ENCODE measurements at regions of chr7 and their contacts with region 1.

Region 1: GRCh38 chr7:70829221-70830059 is 302.5 kb upstream of the GALNT17 start:
- DNase-seq: peak; percentile 60 to 66 (median 63)
- H3K4me3 ChIP-seq: no peak overlapping the region
- H3K4me3 Mint-ChIP-seq: peak overlapping the region; percentile 67 to 88 (median 80)
- H3K27ac ChIP-seq: no peak overlapping the region
- H3K27ac Mint-ChIP-seq: peak overlapping the region in 4 of 7 donors; percentile 17 to 72 (median 36)
- H3K4me1 ChIP-seq: no peaks in the 10 kb centered on the region
- H3K4me1 Mint-ChIP-seq: peaks cover 7 to 13% (median 9%) of the 10 kb centered on the region in 4 donors
- H3K27me3 ChIP-seq: no peaks in the 10 kb centered on the region
- H3K27me3 Mint-ChIP-seq: peaks cover 0 to 1% of the 10 kb centered on the region in 2 donors

Region 2: GRCh38 chr7:70720191-70720873 is 109.1 kb before region 1 on chr7:
- CTCF ChIA-PET with region 1: interaction called, 10 read pairs
- POLR2A ChIA-PET with region 1: no interaction called
- intact Hi-C with region 1: no loop called
- DNase-seq: no peak
- H3K4me3 ChIP-seq: no peak overlapping the region
- H3K4me3 Mint-ChIP-seq: peak overlapping the region; percentile 3 to 69 (median 56)
- H3K27ac ChIP-seq: no peak overlapping the region
- H3K27ac Mint-ChIP-seq: peak overlapping the region; percentile 33 to 83 (median 71)
- H3K4me1 ChIP-seq: peaks cover 10% of the 10 kb centered on the region
- H3K4me1 Mint-ChIP-seq: peaks cover 24 to 61% (median 38%) of the 10 kb centered on the region in 4 donors
- H3K27me3 ChIP-seq: no peaks in the 10 kb centered on the region
- H3K27me3 Mint-ChIP-seq: no peaks in the 10 kb centered on the region

Region 3: DNA sequence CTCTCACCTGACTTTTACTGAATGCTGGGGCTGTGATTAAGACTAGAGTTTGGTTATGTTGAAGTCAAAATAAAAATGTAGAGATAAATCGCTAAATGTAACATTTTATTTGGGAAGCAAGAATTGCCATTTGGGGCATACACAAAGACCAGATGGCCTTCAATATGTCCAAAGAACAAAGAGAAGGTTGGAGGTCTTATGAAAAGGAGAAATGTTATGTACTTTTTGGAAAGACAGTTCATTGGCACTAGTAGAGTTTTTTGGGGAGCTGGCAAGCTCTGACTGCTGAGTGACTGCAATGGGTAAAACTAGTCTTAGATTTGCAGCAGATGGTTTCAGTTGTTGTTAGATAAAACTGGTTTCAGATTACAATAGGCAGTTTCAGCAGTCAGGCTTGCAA is 266.9 kb after region 1 on chr7:
- CTCF ChIA-PET with region 1: no interaction called
- POLR2A ChIA-PET with region 1: no interaction called
- intact Hi-C with region 1: no loop called
- DNase-seq: no peak
- H3K4me3 ChIP-seq: no peak overlapping the region
- H3K4me3 Mint-ChIP-seq: no peak overlapping the region
- H3K27ac ChIP-seq: no peak overlapping the region
- H3K27ac Mint-ChIP-seq: no peak overlapping the region
- H3K4me1 ChIP-seq: no peaks in the 10 kb centered on the region
- H3K4me1 Mint-ChIP-seq: no peaks in the 10 kb centered on the region
- H3K27me3 ChIP-seq: no peaks in the 10 kb centered on the region
- H3K27me3 Mint-ChIP-seq: no peaks in the 10 kb centered on the region

Region 4: DNA sequence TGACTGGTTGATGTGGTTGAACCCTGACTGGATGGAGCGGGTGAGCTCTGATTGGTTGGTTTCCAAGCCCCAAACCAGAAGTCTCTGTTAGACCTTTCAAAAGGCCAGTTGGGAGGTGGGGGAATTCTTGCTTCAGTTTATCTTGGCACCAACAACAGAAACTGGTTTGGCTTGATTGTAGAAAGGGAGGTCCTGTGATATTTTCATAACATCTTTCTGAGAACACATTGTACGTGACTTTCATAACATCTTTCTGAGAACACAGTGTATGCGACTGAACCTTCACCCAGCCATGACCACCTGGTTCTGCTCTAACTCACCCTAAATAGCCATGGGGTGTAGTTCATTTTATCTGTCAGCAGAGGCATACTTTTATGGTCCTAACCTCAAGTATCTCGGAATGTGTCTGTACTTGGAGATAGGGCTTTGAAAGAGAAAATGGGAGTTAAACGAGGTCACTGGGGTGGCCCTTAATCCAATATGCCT is 390.8 kb after region 1 on chr7:
- CTCF ChIA-PET with region 1: no interaction called
- POLR2A ChIA-PET with region 1: no interaction called
- intact Hi-C with region 1: no loop called
- DNase-seq: no peak
- H3K4me3 ChIP-seq: no peak overlapping the region
- H3K4me3 Mint-ChIP-seq: no peak overlapping the region
- H3K27ac ChIP-seq: no peak overlapping the region
- H3K27ac Mint-ChIP-seq: no peak overlapping the region
- H3K4me1 ChIP-seq: no peaks in the 10 kb centered on the region
- H3K4me1 Mint-ChIP-seq: no peaks in the 10 kb centered on the region
- H3K27me3 ChIP-seq: no peaks in the 10 kb centered on the region
- H3K27me3 Mint-ChIP-seq: no peaks in the 10 kb centered on the region

Region 5: DNA sequence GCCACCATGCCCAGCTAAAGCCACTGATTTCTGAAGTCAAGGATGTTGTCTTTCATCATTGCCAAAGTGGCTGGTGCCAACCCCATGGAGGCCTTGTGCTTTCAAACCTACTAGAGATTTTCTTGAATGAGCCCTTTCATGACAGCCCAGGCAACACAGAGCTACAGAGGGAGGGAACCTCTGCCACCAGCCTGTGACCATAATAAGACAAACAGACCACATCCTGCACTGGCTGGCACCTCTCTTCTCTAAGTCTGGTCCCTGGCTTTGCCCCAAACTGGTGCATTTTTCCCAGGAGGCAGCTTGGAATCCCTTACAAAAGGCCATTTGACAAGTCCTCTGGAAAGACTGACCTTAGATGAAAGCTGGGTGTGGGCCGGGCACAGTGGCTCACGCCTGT is 651.4 kb after region 1 on chr7:
- CTCF ChIA-PET with region 1: no interaction called
- POLR2A ChIA-PET with region 1: no interaction called
- intact Hi-C with region 1: no loop called
- DNase-seq: no peak
- H3K4me3 ChIP-seq: no peak overlapping the region
- H3K4me3 Mint-ChIP-seq: no peak overlapping the region
- H3K27ac ChIP-seq: no peak overlapping the region
- H3K27ac Mint-ChIP-seq: no peak overlapping the region
- H3K4me1 ChIP-seq: no peaks in the 10 kb centered on the region
- H3K4me1 Mint-ChIP-seq: no peaks in the 10 kb centered on the region
- H3K27me3 ChIP-seq: no peaks in the 10 kb centered on the region
- H3K27me3 Mint-ChIP-seq: no peaks in the 10 kb centered on the region

Region 6: DNA sequence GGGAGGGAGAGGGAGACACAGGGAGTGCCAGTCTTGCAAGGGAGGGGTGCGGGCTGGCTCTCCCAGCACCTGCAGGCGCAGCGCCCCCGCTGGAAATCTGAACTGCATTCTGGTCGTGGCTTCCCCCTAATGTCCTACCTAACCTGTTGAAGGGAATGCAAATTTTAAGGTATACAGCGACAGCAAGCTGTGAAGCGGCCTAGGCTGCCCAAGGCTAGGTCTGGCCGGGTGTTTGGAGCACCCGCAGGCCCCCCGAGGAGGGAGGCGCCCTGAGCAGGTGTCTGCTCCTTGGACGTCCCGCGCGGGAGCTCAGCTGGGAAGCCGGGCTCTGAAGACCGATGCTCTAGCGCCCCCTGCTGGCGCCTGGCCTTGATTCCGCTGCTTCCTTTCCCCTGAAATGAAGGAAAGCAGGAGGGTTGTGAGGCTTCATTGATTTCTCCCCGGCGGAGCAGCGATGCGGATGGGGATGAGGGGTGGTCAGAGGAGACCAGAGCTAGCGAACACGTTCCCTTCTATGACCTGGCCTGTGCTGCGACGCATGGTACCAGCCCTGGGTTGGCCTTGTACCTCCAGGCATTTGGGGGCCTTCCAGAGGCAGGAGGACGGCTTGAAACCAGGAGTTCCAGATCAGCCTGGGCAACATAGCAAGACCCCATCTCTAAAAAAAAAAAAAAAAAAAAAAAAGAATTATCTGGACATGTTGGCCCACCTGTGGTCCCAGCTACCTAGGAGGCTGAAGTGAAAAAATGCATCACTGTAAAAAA is 903.8 kb after region 1 on chr7:
- CTCF ChIA-PET with region 1: interaction called, 52 read pairs
- POLR2A ChIA-PET with region 1: interaction called, 4 read pairs
- intact Hi-C with region 1: no loop called
- DNase-seq: peak; percentile 37 to 55 (median 46)
- H3K4me3 ChIP-seq: no peak overlapping the region
- H3K4me3 Mint-ChIP-seq: no peak overlapping the region
- H3K27ac ChIP-seq: no peak overlapping the region
- H3K27ac Mint-ChIP-seq: peak overlapping the region in 1 of 7 donors; percentile 60
- H3K4me1 ChIP-seq: no peaks in the 10 kb centered on the region
- H3K4me1 Mint-ChIP-seq: peaks cover 0 to 7% (median 2%) of the 10 kb centered on the region in 4 donors
- H3K27me3 ChIP-seq: no peaks in the 10 kb centered on the region
- H3K27me3 Mint-ChIP-seq: no peaks in the 10 kb centered on the region

Region 7: GRCh38 chr7:72493850-72494661 is 1664.6 kb after region 1 on chr7:
- CTCF ChIA-PET with region 1: no interaction called
- POLR2A ChIA-PET with region 1: no interaction called
- intact Hi-C with region 1: loop called (anchors 5 kb)
- DNase-seq: peak in 4 of 5 donors; percentile 5 to 23 (median 8)
- H3K4me3 ChIP-seq: no peak overlapping the region
- H3K4me3 Mint-ChIP-seq: no peak overlapping the region
- H3K27ac ChIP-seq: no peak overlapping the region
- H3K27ac Mint-ChIP-seq: no peak overlapping the region
- H3K4me1 ChIP-seq: no peaks in the 10 kb centered on the region
- H3K4me1 Mint-ChIP-seq: no peaks in the 10 kb centered on the region
- H3K27me3 ChIP-seq: no peaks in the 10 kb centered on the region
- H3K27me3 Mint-ChIP-seq: peaks cover 0 to 1% of the 10 kb centered on the region in 2 donors

Measured in CD4-positive, alpha-beta memory T cell (primary cell).